HCT116 (cell line): ENCODE measurements at regions of chr11 and their contacts with region 1.

Region 1: GRCh38 chr11:2298795-2299761 is 2.6 kb downstream of the C11orf21 start:
- DNase-seq: no peak
- ATAC-seq: peak; percentile 75
- H3K4me3 ChIP-seq: no peak overlapping the region
- H3K27ac ChIP-seq: no peak overlapping the region
- H3K4me1 ChIP-seq: no peaks in the 10 kb centered on the region
- H3K27me3 ChIP-seq: no peaks in the 10 kb centered on the region
- CTCF ChIP-seq: peak; percentile 54 to 88 (median 56)
- POLR2A ChIP-seq: no peak
- RAD21 ChIP-seq: peak; percentile 92

Region 2: DNA sequence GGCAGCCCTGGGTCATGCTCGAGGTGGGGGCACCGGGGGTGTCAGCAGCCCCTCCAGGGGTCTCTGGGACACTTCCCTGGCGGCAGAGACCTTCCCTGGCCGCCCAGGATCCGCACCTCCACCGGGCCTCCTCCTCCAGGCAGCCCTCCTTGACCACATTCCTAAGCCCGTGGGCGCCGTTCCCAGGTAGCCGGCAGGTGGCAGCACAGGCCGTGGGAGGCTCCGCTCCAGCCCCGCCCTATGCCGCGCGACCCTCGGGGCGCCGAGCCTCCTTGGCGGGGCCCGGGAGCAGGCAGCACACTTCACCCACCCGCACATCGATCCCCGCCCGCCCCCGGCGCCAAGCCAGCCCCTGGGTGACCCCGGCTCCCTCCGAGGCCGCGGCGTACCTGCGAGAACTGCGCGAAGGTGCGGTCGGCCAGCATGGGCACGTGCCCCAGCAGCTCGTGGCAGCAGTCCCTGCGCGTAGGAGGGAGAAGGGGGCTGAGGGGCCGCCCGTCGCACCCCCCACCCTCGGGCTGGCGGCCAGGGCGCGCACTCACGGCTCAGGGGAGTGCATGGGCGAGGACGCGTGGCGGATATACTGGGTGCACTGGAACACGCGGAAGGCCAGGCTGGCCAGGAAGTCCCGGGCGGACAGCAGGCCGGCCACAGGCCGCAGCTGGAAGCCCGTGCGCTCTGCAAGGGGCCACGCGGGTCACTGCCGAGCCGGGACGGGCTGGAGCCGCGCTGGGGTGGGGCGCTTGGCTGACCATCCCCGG is 132.8 kb before region 1 on chr11:
- CTCF ChIA-PET with region 1: no interaction called
- POLR2A ChIA-PET with region 1: no interaction called
- RAD21 ChIA-PET with region 1: no interaction called
- intact Hi-C with region 1: loop called (anchors 1 kb)
- DNase-seq: no peak
- ATAC-seq: peak; percentile 86
- H3K4me3 ChIP-seq: no peak overlapping the region
- H3K27ac ChIP-seq: no peak overlapping the region; the same call in 1 of the 2 replicates
- H3K4me1 ChIP-seq: peaks cover 2 to 21% of the 10 kb centered on the region in 2 experiments; a peak in 3 of 4 replicates
- H3K27me3 ChIP-seq: no peaks in the 10 kb centered on the region
- CTCF ChIP-seq: peak; percentile 68 to 72 (median 69); a peak in 5 of 6 replicates
- POLR2A ChIP-seq: no peak
- RAD21 ChIP-seq: peak; percentile 81

Region 3: GRCh38 chr11:2186669-2187279 is 112.3 kb before region 1 on chr11:
- CTCF ChIA-PET with region 1: interaction called, 3 read pairs
- POLR2A ChIA-PET with region 1: no interaction called
- RAD21 ChIA-PET with region 1: no interaction called
- intact Hi-C with region 1: loop called (anchors 1 kb)
- DNase-seq: peak; percentile 51
- ATAC-seq: peak; percentile 87
- H3K4me3 ChIP-seq: no peak overlapping the region
- H3K27ac ChIP-seq: no peak overlapping the region; the same call in 1 of the 2 replicates
- H3K4me1 ChIP-seq: peaks cover under 1 to 12% of the 10 kb centered on the region in 2 experiments; a peak in 3 of 4 replicates
- H3K27me3 ChIP-seq: no peaks in the 10 kb centered on the region
- CTCF ChIP-seq: peak in 2 of 3 experiments; percentile 74; a peak in 4 of 6 replicates
- POLR2A ChIP-seq: no peak
- RAD21 ChIP-seq: no peak

Region 4: DNA sequence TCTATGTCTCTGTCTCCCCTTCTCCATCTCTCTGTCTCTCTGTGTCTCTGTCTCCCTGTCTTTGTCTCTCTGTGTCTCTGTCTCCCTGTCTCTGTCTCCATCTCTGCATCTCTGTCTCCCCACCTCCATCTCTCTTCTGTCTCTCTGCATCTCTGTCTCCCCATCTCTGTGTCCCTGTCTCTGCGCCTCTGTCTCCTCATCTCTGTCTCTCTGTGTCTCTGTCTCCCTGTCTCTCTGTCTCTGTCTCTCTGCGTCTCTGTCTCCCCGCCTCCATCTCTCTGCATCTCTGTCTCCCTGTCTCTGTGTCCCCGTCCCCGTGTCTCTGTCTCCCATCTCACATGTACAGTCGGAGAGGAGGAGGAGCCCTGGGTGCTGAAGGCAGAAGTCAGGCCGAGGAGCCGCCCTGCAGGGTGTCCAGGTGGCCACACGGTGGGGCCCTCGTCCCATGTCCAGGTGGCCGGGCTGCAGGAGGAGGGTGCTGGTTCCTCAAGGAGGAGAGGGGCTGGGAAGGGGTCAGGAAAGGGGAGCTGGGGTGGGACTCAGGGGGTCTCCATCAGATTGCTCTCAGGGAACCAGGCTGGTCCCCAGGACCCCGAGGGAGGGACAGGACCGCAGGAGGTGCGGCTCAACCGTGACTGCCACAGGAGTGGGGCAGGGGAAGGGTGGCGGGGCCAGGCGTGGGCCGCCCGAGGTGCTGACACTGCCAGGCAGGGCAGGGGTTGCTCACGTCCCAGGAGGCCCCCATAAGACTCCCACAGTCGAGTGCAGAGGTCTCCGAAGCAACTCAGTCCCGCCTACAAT is 101.9 kb before region 1 on chr11:
- CTCF ChIA-PET with region 1: interaction called, 9 read pairs
- POLR2A ChIA-PET with region 1: no interaction called
- RAD21 ChIA-PET with region 1: interaction called in 1 of 2 experiments, 3 read pairs
- intact Hi-C with region 1: loop called (anchors 1 kb)
- DNase-seq: peak; percentile 54
- ATAC-seq: peak; percentile 90
- H3K4me3 ChIP-seq: no peak overlapping the region
- H3K27ac ChIP-seq: no peak overlapping the region; the same call in 1 of the 2 replicates
- H3K4me1 ChIP-seq: peaks cover 5 to 20% of the 10 kb centered on the region in 2 experiments; a peak in 3 of 4 replicates
- H3K27me3 ChIP-seq: no peaks in the 10 kb centered on the region
- CTCF ChIP-seq: peak; percentile 85 to 97 (median 97)
- POLR2A ChIP-seq: no peak
- RAD21 ChIP-seq: peak; percentile 98